GM10248 (cell line): ENCODE measurements at regions of chr17 and their contacts with region 1.

Region 1: GRCh38 chr17:55717898-55718735 is 4.5 kb downstream of the TMEM100 start:
- DNase-seq: peak; percentile 24
- CTCF ChIP-seq: peak; percentile 60

Region 2: GRCh38 chr17:55742272-55743102 is 24.4 kb after region 1 on chr17:
- CTCF ChIA-PET with region 1: interaction called, 18 read pairs
- POLR2A ChIA-PET with region 1: no interaction called
- DNase-seq: peak; percentile 31
- CTCF ChIP-seq: no peak